CD4-positive, alpha-beta T cell (primary cell): ENCODE measurements at regions of chr10 and their contacts with region 1.

Region 1: DNA sequence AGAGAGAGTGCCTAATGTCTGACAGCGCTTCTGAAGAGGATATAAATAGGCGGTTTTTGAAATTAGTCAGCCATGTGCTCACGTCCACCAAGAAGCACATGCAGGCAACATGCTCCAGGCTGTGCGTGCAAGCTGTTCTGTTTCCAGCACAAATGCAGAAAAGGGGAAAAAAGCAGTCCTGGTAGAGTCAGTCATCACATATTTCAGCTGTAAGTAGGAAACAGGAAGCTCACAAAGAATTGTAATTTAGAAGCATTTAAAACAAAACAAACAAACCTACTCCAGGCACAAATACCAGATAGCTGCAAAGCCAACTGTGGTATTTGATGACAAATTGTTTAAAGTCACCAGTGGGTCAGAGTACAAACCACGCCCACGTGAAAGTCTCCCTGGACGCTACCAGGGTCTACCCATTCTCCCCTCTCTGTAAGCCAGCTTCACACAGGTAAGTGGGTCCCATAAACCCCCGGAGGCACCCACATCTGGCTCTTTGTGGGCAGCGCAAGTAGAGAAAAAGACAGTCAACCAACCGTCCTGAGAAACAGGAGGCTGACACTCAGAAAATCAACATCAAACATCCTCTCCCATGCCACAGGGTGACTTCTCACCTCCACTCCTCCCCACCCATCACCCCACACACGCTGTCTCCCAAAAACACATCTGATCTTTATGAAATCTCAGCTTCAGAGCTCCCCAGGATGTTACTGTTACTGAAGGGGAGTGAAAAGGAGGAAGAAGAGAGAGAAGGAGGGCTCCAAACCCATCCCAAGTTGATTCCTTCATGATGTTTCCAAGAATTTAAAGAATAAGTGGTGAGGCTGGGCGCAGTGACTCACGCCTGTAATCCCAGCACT is 186.4 kb downstream of the FAM107B start:
- DNase-seq: peak in 5 of 14 experiments; percentile 44 to 84 (median 67)
- ATAC-seq: peak; percentile 33
- H3K4me3 ChIP-seq: peak overlapping the region; percentile 17
- H3K4me3 Mint-ChIP-seq: peak overlapping the region; percentile 87
- H3K27ac ChIP-seq: peak overlapping the region; percentile 90 to 95
- H3K27ac Mint-ChIP-seq: peak overlapping the region; percentile 97
- H3K4me1 ChIP-seq: peaks cover 82% of the 10 kb centered on the region
- H3K4me1 Mint-ChIP-seq: peaks cover 95% of the 10 kb centered on the region
- H3K27me3 ChIP-seq: no peaks in the 10 kb centered on the region
- H3K27me3 Mint-ChIP-seq: no peaks in the 10 kb centered on the region
- CTCF ChIP-seq: no peak

Region 2: DNA sequence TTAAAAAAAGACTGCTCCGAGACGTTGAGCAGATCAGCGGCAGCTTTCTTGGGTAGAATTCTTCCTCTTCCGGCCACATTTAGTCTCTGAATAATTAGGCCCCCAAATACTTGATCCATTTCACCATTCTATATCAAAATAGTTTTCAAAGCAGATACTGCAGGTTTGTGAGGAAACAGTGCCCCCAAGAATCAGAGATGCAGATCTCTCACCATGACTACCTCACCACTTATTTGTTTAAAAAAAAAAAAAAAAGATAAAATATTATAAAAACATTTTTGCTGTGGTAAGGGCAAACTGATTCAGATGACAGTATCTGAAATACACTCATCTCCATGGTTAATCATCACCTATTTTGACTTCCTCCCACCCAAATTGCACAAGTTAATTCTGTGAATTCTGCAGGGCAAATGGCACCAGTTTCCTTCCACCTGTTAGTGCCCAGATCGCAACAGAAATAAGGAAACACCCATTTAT is 24.0 kb before region 1 on chr10:
- CTCF ChIA-PET with region 1: interaction called, 8 read pairs
- POLR2A ChIA-PET with region 1: interaction called, 101 read pairs
- intact Hi-C with region 1: no loop called
- DNase-seq: peak in 4 of 14 experiments; percentile 56 to 85 (median 78)
- ATAC-seq: peak; percentile 57
- H3K4me3 ChIP-seq: peak overlapping the region; percentile 32
- H3K4me3 Mint-ChIP-seq: peak overlapping the region; percentile 87
- H3K27ac ChIP-seq: peak overlapping the region; percentile 80 to 82
- H3K27ac Mint-ChIP-seq: peak overlapping the region; percentile 98
- H3K4me1 ChIP-seq: peaks cover 83% of the 10 kb centered on the region
- H3K4me1 Mint-ChIP-seq: peaks cover 97% of the 10 kb centered on the region
- H3K27me3 ChIP-seq: no peaks in the 10 kb centered on the region
- H3K27me3 Mint-ChIP-seq: no peaks in the 10 kb centered on the region
- CTCF ChIP-seq: no peak

Region 3: GRCh38 chr10:14598809-14599764 is 10.8 kb after region 1 on chr10:
- CTCF ChIA-PET with region 1: interaction called, 9 read pairs
- POLR2A ChIA-PET with region 1: interaction called, 14 read pairs
- intact Hi-C with region 1: loop called (anchors 1 to 2 kb)
- DNase-seq: peak in 1 of 14 experiments; percentile 31
- ATAC-seq: peak; percentile 4
- H3K4me3 ChIP-seq: no peak overlapping the region
- H3K4me3 Mint-ChIP-seq: peak overlapping the region; percentile 3
- H3K27ac ChIP-seq: peak overlapping the region in 1 of 2 donors; percentile 48
- H3K27ac Mint-ChIP-seq: peak overlapping the region; percentile 54
- H3K4me1 ChIP-seq: peaks cover 70% of the 10 kb centered on the region
- H3K4me1 Mint-ChIP-seq: peaks cover 90% of the 10 kb centered on the region
- H3K27me3 ChIP-seq: no peaks in the 10 kb centered on the region
- H3K27me3 Mint-ChIP-seq: no peaks in the 10 kb centered on the region
- CTCF ChIP-seq: no peak